ENCODE measurements at regions of chr3 and their contacts with region 1.

Region 1: DNA sequence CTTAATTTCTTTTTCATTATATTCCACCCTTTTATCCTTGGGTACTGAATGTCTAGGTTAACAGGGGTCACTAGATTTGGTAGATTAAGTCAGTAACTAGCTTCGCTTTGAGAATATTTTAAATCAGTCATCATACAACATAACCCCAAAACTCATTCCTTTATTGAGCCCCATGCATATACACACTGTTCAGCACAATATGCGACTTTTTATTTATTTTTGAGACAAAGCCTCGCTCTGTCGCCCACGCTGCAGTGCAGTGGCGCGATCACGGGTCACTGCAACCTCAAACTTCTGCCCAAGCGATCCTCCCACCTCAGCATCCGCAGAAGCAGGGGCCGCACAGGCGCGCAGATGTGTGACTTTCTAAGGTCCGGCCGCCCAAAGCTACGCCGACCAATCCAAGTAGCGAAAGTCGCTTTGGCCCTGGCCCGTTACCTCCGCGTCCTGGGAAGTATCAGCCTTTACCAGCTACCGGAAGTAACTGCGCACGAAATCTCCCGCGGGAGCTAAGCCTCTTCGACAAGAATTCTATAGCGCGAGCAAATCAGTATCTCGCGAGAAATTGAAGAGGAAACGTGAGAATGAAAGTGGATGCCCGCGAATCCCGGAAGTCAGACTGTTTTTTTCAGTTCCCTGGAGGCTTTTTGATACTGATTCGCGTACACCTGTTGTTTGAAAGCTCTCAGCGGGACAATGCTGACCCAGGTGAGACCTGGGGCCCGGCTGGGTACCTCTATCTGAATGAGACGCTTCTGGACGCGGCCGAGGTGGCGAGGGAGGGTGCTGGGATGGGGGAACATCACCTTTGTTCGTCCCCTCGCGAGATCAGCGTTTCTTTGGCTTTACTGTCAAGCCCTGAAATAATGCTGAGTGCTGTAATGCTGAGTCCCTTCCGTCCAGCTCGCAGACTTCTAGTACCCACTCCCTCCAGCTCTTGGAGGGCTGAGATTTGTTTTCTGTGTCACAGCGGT is at the starts of genes DHFR2 and NSUN3:
- DNase-seq: peak; percentile 95
- ATAC-seq: peak; percentile 95
- H3K4me3 ChIP-seq: peak within 1 kb of the TSS; percentile 71 to 78
- H3K27ac ChIP-seq: peak within 1 kb of the TSS; percentile 93
- H3K4me1 ChIP-seq: peaks cover 6 to 15% of the 10 kb centered on the region in 2 experiments; a peak in 3 of 4 replicates
- H3K27me3 ChIP-seq: no peaks in the 10 kb centered on the region
- CTCF ChIP-seq: no peak
- POLR2A ChIP-seq: peak; percentile 64
- RAD21 ChIP-seq: no peak
- total RNA-seq, gene DHFR2: 1.8 TPM
- total RNA-seq, gene NSUN3: 6.6 TPM

Region 2: GRCh38 chr3:93843981-93844380 is 218.7 kb before region 1 on chr3:
- CTCF ChIA-PET with region 1: no interaction called
- POLR2A ChIA-PET with region 1: no interaction called
- RAD21 ChIA-PET with region 1: no interaction called
- intact Hi-C with region 1: loop called (anchors 10 kb)
- DNase-seq: peak; percentile 16
- ATAC-seq: peak; percentile 49; the same call in 1 of the 2 replicates
- H3K4me3 ChIP-seq: no peak overlapping the region
- H3K27ac ChIP-seq: no peak overlapping the region
- H3K4me1 ChIP-seq: peaks cover 0 to 5% of the 10 kb centered on the region in 2 experiments; a peak in 2 of 4 replicates
- H3K27me3 ChIP-seq: no peaks in the 10 kb centered on the region
- CTCF ChIP-seq: no peak
- POLR2A ChIP-seq: no peak
- RAD21 ChIP-seq: no peak

Region 3: DNA sequence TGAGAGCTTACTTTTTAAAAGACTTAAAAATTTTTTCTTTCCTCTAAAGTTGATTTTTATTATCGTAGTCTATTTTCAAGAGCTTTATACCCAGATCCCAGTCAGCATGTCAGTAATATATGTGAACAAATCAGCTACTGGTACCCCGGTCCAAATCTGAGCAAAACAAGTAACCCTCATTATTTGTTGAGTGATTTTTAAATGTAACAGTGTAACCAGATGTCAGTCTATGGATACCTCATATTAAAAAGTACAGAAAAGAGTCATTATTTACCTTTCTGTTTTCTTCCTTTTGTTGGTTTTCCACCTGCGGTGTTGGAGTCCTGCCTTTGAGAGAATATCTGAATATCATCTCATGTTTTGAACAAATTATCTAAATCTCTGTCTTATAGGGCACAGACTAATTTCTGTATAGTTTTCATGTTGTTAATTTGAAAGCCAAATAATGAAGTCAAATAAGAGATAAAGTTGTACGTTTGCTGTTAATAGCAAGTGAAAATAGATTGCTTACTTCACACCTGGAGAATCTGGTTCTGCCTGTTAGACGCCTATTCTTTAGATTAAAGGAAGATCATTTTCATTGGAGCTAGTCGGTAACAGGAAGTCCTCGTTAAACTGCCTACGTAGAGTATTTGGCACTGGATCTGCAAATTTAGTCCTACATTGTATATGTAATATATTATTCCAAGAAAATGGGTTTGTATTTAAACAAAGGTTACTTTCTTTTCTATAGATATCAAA is 34.5 kb before region 1 on chr3 and contains the start of gene STX19:
- CTCF ChIA-PET with region 1: no interaction called
- POLR2A ChIA-PET with region 1: interaction called, 10 read pairs
- RAD21 ChIA-PET with region 1: no interaction called
- intact Hi-C with region 1: no loop called
- DNase-seq: peak; percentile 2
- ATAC-seq: no peak
- H3K4me3 ChIP-seq: no peak within 1 kb of the TSS
- H3K27ac ChIP-seq: no peak within 1 kb of the TSS
- H3K4me1 ChIP-seq: peaks cover 6% of the 10 kb centered on the region in 2 experiments
- H3K27me3 ChIP-seq: no peaks in the 10 kb centered on the region
- CTCF ChIP-seq: no peak
- POLR2A ChIP-seq: no peak
- RAD21 ChIP-seq: no peak
- total RNA-seq, gene STX19: not detected